ENCODE measurements at regions of chr16 and their contacts with region 1.

Region 1: DNA sequence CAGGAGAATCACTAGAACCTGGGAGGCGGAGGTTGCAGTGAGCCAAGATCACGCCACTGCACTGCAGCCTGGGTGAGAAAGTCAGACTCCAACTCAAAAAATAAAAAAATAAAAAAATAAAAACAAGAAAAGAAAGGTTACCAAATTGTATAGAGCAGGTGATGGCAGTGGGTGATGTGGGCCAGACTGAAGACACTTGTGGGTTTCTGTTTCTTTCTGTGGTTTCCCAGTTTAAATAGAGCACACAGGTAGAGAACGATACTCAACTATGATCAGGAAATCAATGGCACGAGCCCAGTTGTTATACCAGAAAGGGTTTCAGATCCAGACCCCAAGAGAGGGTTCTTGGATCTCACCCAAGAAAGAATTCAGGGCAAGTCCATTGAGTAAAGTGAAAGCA is 32.6 kb downstream of the NUBP1 start:
- DNase-seq: no peak
- ATAC-seq: no peak
- H3K4me3 ChIP-seq: no peak overlapping the region
- H3K27ac ChIP-seq: no peak overlapping the region
- H3K4me1 ChIP-seq: peaks cover 0 to 9% (median 0%) of the 10 kb centered on the region in 9 donors
- H3K27me3 ChIP-seq: no peaks in the 10 kb centered on the region
- CTCF ChIP-seq: no peak

Region 2: DNA sequence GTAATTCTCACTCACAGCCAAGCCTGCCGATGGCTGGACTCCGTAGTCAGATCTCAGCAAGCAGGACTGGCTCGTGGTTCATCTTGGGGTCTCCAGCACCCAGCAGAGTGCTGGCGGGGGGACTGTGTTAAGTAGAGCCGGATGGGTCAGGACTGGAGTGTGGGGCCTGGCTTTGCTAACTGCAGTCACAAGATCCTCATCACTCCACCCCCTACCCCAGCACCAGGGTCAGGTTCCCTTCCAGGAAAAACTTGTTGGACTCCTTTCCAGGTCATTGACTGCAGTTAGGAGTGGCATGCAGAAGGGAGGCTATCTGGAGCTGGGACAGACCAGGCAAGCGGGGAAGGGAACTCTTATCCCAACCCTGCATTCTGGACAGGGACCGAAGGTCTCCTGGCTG is 106.7 kb after region 1 on chr16:
- intact Hi-C with region 1: loop called in 1 of 10 experiments (anchors 10 kb)
- DNase-seq: no peak
- ATAC-seq: peak in 1 of 8 donors; percentile 19
- H3K4me3 ChIP-seq: no peak overlapping the region
- H3K27ac ChIP-seq: no peak overlapping the region
- H3K4me1 ChIP-seq: peaks cover 4 to 94% (median 20%) of the 10 kb centered on the region in 9 donors
- H3K27me3 ChIP-seq: peaks cover 0 to 25% (median 17%) of the 10 kb centered on the region in 7 donors
- CTCF ChIP-seq: no peak

Measured in heart right ventricle (tissue), 16 donors.